ENCODE measurements at regions of chr4 and their contacts with region 1.

Region 1: GRCh38 chr4:73593631-73594241 is 26.5 kb downstream of the RASSF6 start:
- DNase-seq: peak; percentile 63
- H3K4me3 ChIP-seq: no peak overlapping the region
- H3K27ac ChIP-seq: no peak overlapping the region
- H3K4me1 ChIP-seq: peaks cover 11% of the 10 kb centered on the region
- H3K27me3 ChIP-seq: no peaks in the 10 kb centered on the region

Region 2: DNA sequence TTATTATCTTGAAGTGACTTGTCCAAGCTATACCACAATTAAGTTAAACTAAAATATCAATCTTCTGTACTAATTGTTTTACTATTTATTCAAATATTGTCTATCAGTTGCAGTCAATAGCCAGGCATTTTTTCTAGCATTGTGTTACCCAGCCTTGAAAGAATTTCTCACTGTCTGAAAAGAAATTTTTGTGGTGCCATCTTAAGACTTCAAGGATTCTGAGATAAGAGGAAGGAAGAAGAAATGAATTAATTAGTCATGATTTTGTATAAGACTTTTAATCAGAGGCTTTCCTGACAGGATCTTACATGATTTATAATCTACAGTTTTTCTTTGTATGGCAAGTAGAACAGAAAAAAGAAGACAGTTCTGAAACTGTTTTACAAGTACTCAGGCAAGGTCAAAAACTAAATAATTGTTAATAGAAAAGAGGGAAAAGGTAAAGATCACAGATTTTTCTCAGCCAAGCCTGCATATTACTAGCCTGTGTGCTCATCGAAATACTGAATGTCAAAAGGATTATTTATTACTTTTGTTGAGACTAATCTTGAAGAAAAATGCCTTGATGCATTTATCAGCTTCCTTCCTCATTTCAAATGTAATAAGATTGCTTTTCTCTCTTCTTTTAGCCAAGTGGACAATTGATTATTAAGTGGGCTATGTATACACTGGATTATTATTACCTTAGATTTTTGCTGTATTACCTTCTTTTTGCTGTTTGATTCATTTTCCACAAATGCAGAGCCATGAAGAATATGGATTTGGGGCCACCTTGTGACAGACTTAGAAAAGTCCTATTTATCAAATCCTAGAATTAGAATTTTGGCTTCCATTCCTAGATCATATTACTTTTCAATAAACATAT is 329.3 kb after region 1 on chr4:
- in situ Hi-C with region 1: loop called (anchors 10 kb)
- DNase-seq: peak; percentile 69
- H3K4me3 ChIP-seq: no peak overlapping the region
- H3K27ac ChIP-seq: no peak overlapping the region
- H3K4me1 ChIP-seq: peaks cover 15% of the 10 kb centered on the region
- H3K27me3 ChIP-seq: no peaks in the 10 kb centered on the region